ENCODE measurements at regions of chr2 and their contacts with region 1.

Region 1: DNA sequence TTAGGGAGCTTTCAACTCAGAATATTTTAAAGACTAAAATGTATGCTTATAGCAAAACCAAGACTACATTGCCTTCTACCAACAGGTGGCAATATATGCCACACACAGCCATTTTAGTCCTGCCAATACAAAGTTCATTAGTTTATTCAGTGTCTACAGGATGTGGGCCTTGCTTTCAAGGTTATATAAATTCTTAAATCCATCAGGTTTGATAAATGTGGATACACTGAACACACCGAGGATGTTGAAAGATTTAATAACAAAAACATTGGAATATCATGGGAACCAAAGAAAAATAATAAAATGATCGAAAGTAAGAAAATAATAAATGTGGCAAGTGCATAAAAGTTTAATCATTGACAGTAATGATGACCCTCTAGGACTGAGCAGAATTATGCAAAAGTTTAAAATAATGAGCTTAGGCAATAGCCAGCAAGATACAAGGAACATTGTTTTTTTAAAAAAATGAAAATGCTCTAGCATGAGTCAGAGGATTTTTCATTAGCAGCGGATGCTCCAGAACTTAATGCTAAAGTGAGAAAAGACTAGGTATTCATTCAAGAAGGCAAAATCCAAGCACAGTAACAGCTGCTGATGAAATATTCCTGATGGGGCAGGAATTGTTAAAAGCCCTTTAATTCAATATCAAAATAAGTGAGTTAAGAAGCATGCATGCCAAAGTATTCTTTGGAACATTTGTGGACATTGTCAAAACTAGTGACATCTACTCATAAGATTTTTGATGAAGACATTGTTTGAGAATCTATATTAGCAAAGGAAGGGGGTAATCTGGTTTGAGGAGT is 14.2 kb downstream of the SCN9A start:
- DNase-seq: peak; percentile 69
- ATAC-seq: peak; percentile 79
- H3K4me3 ChIP-seq: no peak overlapping the region
- H3K27ac ChIP-seq: peak overlapping the region; percentile 28; the same call in 1 of the 2 replicates
- H3K4me1 ChIP-seq: peaks cover 3% of the 10 kb centered on the region
- H3K27me3 ChIP-seq: no peaks in the 10 kb centered on the region
- CTCF ChIP-seq: peak; percentile 54
- POLR2A ChIP-seq: no peak
- RAD21 ChIP-seq: peak; percentile 57

Region 2: GRCh38 chr2:166314022-166314759 is 47.4 kb before region 1 on chr2:
- CTCF ChIA-PET with region 1: no interaction called
- POLR2A ChIA-PET with region 1: no interaction called
- dilution Hi-C with region 1: no loop called
- in situ Hi-C with region 1: no loop called
- intact Hi-C with region 1: loop called (anchors 5 kb)
- DNase-seq: peak; percentile 94
- ATAC-seq: peak; percentile 95
- H3K4me3 ChIP-seq: no peak overlapping the region
- H3K27ac ChIP-seq: peak overlapping the region; percentile 98
- H3K4me1 ChIP-seq: peaks cover 10% of the 10 kb centered on the region
- H3K27me3 ChIP-seq: no peaks in the 10 kb centered on the region
- CTCF ChIP-seq: no peak
- POLR2A ChIP-seq: no peak
- RAD21 ChIP-seq: no peak

Region 3: DNA sequence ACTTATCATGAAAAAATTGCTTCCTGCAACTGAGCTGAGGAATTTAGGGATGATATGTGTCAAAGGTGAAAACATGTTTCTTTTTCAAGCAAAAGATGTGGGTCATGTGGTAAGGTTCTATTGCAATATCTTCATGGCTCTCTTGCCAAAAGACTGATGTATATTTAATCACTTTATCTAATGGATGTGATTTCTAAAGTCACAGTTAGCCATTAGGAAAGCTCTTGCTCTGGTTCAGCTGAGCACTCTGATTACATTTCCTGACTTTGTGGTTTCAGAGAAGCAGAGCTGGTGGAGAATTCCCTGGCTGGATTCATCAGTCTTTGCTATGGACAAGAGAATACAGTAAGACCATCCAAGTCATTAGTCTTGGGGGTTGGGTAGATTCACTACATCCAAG is 10.2 kb before region 1 on chr2:
- CTCF ChIA-PET with region 1: interaction called, 11 read pairs
- POLR2A ChIA-PET with region 1: no interaction called
- dilution Hi-C with region 1: no loop called
- in situ Hi-C with region 1: no loop called
- intact Hi-C with region 1: no loop called
- DNase-seq: peak; percentile 86
- ATAC-seq: peak; percentile 88
- H3K4me3 ChIP-seq: no peak overlapping the region
- H3K27ac ChIP-seq: no peak overlapping the region
- H3K4me1 ChIP-seq: peaks cover 1% of the 10 kb centered on the region; the same call in 1 of the 2 replicates
- H3K27me3 ChIP-seq: no peaks in the 10 kb centered on the region
- CTCF ChIP-seq: no peak
- POLR2A ChIP-seq: no peak
- RAD21 ChIP-seq: no peak

Region 4: GRCh38 chr2:166417669-166418068 is 56.1 kb after region 1 on chr2:
- CTCF ChIA-PET with region 1: no interaction called
- POLR2A ChIA-PET with region 1: no interaction called
- dilution Hi-C with region 1: no loop called
- in situ Hi-C with region 1: no loop called
- intact Hi-C with region 1: loop called (anchors 2 kb)
- DNase-seq: peak; percentile 65
- ATAC-seq: no peak; the same call in 1 of the 2 replicates
- H3K4me3 ChIP-seq: no peak overlapping the region
- H3K27ac ChIP-seq: no peak overlapping the region
- H3K4me1 ChIP-seq: no peaks in the 10 kb centered on the region
- H3K27me3 ChIP-seq: no peaks in the 10 kb centered on the region
- CTCF ChIP-seq: no peak; the same call in 1 of the 2 replicates
- POLR2A ChIP-seq: no peak
- RAD21 ChIP-seq: 0 out of 2 replicates have a peak, but pooled peaks have one; percentile 4

Region 5: DNA sequence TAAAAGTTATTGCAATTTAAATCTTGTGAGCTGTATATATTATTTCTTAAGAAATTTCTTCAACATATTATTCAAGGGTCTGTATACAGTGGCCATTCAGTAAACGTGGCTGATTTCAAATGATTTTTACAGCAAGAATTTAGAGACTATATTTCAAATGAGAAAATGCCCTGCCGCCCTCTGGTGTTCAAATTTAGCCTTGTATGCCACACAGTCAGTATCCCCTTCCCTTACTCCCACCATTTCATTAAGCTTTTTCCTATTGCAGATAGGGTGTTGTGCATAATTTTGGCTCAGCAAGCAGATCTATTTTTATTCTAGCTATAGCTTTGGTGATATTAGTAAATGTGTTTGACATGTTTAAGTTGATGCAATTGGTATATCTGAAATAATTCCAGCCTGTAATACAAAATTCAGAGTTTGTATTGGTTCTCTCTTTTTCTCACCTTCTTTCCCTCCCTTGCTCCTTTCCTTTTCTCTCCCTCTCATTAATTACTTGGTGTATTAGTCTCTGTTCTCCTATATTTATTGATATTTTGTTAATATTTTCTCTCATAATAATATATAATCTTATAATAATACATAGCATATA is 155.3 kb after region 1 on chr2:
- CTCF ChIA-PET with region 1: no interaction called
- POLR2A ChIA-PET with region 1: no interaction called
- dilution Hi-C with region 1: no loop called
- in situ Hi-C with region 1: no loop called
- intact Hi-C with region 1: loop called (anchors 1 kb)
- DNase-seq: peak; percentile 40
- ATAC-seq: peak; percentile 60; the same call in 1 of the 2 replicates
- H3K4me3 ChIP-seq: no peak overlapping the region
- H3K27ac ChIP-seq: no peak overlapping the region
- H3K4me1 ChIP-seq: peaks cover 5% of the 10 kb centered on the region
- H3K27me3 ChIP-seq: no peaks in the 10 kb centered on the region
- CTCF ChIP-seq: peak; percentile 60
- POLR2A ChIP-seq: no peak
- RAD21 ChIP-seq: peak; percentile 55

Region 6: DNA sequence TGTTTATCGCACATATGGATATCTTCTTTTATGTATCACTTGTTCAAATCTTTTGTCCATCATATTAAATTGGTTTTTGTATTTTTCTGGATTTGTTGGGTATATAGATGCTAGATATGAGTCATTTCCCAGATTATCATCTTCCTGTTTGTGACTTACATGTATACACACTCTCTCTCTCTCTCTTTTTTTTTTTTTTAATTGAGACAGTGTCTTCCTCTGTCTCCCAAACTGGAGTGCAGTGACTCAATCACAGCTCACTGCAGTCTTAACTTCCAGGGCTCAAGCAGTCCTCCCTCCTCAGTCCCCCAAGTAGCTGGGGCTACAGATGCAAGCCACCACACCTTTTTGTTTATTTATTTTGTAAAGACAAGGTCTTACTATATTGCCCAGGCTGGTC is 570.5 kb after region 1 on chr2:
- CTCF ChIA-PET with region 1: no interaction called
- POLR2A ChIA-PET with region 1: no interaction called
- dilution Hi-C with region 1: no loop called
- in situ Hi-C with region 1: no loop called
- intact Hi-C with region 1: loop called (anchors 5 kb)
- DNase-seq: peak; percentile 68
- ATAC-seq: 0 out of 2 replicates have a peak, but pooled peaks have one; percentile 24
- H3K4me3 ChIP-seq: no peak overlapping the region
- H3K27ac ChIP-seq: no peak overlapping the region
- H3K4me1 ChIP-seq: no peaks in the 10 kb centered on the region
- H3K27me3 ChIP-seq: no peaks in the 10 kb centered on the region
- CTCF ChIP-seq: no peak
- POLR2A ChIP-seq: no peak
- RAD21 ChIP-seq: no peak

Measured in IMR-90 (cell line).